Kidney (tissue), 22 donors: ENCODE measurements at regions of chr9 and their contacts with region 1.

Region 1: DNA sequence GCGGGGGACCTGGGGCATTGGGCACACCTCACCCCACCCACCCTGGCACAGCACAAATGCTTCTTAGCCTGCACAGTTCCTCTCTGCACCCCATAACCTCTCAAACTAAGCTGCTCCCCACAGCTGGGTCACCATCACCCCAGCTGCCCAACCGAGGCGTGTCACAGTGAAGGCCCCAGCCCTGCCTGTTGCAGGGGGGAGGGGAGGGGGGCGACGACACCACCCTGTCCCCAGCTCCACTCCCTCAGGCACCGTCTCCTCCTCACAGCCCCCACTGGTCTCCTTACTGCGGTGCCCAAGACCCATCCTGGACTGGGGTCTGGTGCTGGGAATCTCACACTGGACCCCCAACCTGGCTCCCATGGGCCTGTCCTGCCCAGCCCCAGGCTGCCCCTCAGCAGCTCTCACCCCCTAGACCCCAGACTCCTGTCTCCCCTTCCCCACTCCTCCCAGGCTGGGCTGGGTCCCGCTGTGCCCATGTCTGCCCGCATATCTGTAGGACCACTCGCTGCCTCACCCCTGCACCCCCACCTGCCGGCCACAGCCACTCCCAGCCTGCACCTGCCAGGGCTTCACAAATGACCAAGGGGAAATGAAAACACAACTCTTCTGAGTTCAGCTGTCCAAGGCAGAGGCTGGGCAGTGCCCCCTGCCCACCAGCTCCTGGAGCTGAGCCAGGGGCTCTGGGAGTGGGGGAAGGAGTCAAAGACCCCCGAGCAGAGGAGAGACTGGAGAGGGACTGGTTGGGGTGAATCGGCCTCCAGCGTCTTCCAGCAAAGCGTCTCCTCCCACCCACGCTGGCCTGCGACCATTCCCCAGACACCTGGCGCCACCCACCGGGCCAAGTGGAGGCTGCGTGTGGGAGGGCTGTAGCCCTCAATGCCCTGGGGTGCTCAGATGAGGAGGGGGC is 32.7 kb upstream of the EGFL7 start:
- DNase-seq: peak; percentile 76 to 86 (median 85)
- H3K4me3 ChIP-seq: no peak overlapping the region
- H3K27ac ChIP-seq: no peak overlapping the region
- H3K4me1 ChIP-seq: peaks cover 8 to 25% (median 22%) of the 10 kb centered on the region in 3 donors
- H3K27me3 ChIP-seq: peaks cover 4% of the 10 kb centered on the region
- CTCF ChIP-seq: peak; percentile 53

Region 2: DNA sequence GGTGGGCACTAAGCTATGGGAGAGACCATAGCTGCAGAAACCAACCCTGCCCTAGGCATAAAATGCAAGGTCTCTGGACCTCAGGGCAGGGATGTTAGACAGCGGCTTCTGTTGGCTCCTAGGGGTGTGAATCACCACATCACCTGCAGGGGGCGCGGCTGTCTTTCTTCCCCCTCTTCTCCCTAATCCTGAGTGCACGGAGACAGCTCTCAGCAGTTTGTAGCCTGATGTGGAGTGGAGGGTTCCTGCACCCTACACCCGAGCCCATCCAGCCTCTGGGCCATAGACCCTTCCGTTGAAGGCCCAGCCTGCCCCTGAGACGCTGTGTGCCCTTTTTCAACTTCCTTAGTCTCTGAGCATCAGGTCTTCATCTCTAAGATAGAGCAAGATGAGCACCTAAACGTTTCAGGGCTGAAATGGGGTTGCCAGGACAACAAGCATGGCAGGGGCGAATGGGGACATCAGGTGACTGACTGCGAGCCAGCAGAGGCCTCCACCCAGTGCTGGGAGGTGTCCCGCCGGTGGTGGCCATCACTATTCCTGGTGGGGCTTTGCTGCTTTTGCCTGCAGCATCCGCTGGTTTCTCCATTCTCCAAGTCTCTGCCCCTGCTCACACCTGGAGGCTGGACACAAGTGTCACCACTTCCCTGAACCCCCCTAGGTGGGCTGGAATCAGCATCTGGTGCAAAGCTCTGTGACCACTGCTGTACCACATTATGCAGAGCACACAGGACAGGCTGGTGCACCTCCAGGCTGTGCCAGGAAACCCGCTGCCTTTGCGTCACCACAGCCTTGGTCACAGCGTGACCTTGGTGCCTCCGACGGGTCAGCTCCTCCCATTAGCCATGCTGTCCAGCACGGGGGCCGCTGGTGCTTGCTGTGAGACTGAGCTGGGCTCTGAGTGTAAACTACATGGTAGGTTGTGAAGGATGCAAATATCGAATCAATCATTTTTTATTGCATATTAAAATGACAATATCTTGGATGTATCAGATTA is 144.7 kb before region 1 on chr9:
- intact Hi-C with region 1: loop called (anchors 5 kb)
- DNase-seq: peak in 4 of 5 donors; percentile 85 to 91 (median 88)
- H3K4me3 ChIP-seq: no peak overlapping the region
- H3K27ac ChIP-seq: peak overlapping the region in 1 of 2 donors; percentile 100
- H3K4me1 ChIP-seq: peaks cover 0 to 28% (median 17%) of the 10 kb centered on the region in 3 donors
- H3K27me3 ChIP-seq: no peaks in the 10 kb centered on the region
- CTCF ChIP-seq: peak; percentile 95

Region 3: DNA sequence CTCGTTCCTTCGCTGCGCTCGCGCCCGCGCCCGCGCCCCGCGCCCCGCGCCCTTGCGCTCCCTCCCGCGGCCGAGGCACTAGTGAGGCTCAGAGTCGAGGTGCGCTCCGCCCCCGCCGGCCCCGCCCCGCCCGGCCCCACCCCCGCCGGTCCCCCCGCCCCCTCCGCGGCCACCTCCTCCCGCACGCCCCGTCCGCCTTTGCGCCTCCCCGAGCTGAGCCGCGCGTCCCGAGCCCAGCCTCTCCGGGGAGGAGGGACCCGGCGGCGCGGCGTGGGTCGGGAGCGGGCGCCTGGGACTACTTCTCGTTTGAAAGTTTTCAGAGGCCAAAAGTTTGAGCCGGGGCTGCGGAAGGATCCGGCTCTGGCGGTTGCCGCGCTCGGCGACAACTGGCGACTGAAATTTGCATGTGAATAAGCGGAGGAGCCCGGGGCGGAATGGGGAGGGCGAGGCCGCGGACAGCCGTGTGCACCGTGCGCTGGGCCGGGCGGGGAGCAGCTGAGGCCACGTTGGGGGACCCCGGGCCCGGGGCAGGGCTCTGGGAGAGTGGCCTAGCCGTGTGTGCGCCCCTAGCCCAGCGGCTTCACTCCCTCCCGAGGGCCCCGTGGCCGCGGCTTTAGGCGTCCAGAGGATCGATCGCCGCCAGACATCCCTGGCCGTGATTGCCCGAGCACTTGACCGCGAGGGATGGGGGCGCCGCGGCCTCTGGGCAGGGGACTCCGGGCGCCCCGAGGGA is 83.9 kb before region 1 on chr9 and contains the start of gene NOTCH1:
- intact Hi-C with region 1: loop called (anchors 10 kb)
- DNase-seq: peak; percentile 96 to 98 (median 97)
- H3K4me3 ChIP-seq: peak within 1 kb of the TSS; percentile 67 to 82 (median 79)
- H3K27ac ChIP-seq: peak within 1 kb of the TSS; percentile 92 to 95
- H3K4me1 ChIP-seq: peaks cover 0 to 50% (median 25%) of the 10 kb centered on the region in 3 donors
- H3K27me3 ChIP-seq: no peaks in the 10 kb centered on the region
- CTCF ChIP-seq: peak; percentile 8
- total RNA-seq, gene NOTCH1: 77.2 TPM

Region 4: GRCh38 chr9:136790927-136791641 is 161.1 kb after region 1 on chr9 and contains the start of gene TMEM141:
- intact Hi-C with region 1: no loop called
- DNase-seq: peak; percentile 100
- H3K4me3 ChIP-seq: peak within 1 kb of the TSS; percentile 81 to 90 (median 87)
- H3K27ac ChIP-seq: peak within 1 kb of the TSS; percentile 95 to 97
- H3K4me1 ChIP-seq: peaks cover 3 to 18% (median 6%) of the 10 kb centered on the region in 3 donors
- H3K27me3 ChIP-seq: no peaks in the 10 kb centered on the region
- CTCF ChIP-seq: no peak
- total RNA-seq, gene TMEM141: 96.5 TPM